ENCODE measurements at regions of chr14 and their contacts with region 1.

Region 1: GRCh38 chr14:24673534-24674203 is 39.7 kb upstream of the GZMB start:
- DNase-seq: peak; percentile 94
- H3K4me3 Mint-ChIP-seq: peak overlapping the region; percentile 84
- H3K27ac Mint-ChIP-seq: peak overlapping the region; percentile 98
- H3K4me1 Mint-ChIP-seq: peaks cover 73% of the 10 kb centered on the region
- H3K27me3 Mint-ChIP-seq: no peaks in the 10 kb centered on the region

Region 2: DNA sequence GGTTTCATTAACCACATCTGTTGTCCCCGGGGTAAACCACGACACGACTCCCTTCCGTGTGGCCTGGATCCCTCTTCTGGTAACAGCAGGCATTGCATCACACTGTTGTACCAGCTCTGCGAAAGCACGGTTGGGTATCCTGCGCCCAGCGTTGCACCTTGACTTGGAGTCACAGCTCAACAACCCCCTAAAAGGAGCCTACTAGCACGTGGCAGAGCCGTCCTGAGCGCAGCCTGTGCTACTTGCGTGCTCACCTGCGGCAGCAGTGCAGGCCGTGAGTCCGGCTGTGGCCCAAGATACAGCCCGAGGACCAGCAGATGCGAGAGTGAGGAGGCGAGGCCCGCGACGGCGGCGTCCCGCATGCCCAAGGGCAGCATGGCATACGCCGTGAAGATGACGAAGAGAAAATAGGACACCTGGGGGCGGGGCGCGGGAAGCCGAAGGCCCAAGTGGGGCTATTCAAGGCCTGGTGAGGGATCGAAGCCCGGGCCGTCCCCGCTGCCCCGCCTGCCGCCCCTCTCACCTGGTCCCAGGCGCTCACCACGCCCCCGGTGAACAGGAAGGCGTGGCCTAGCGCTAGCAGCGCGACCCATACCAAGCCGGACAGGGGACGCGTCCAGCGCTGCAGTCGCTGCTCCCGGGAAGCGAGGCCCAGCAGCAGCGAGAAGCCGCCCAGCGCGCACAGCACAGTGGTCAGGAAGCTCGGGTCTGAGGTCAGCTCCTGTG is 341.2 kb before region 1 on chr14:
- intact Hi-C with region 1: loop called (anchors 5 kb)
- DNase-seq: peak; percentile 95
- H3K4me3 Mint-ChIP-seq: peak overlapping the region; percentile 87
- H3K27ac Mint-ChIP-seq: peak overlapping the region; percentile 26
- H3K4me1 Mint-ChIP-seq: peaks cover 51% of the 10 kb centered on the region
- H3K27me3 Mint-ChIP-seq: peaks cover 33% of the 10 kb centered on the region

Region 3: DNA sequence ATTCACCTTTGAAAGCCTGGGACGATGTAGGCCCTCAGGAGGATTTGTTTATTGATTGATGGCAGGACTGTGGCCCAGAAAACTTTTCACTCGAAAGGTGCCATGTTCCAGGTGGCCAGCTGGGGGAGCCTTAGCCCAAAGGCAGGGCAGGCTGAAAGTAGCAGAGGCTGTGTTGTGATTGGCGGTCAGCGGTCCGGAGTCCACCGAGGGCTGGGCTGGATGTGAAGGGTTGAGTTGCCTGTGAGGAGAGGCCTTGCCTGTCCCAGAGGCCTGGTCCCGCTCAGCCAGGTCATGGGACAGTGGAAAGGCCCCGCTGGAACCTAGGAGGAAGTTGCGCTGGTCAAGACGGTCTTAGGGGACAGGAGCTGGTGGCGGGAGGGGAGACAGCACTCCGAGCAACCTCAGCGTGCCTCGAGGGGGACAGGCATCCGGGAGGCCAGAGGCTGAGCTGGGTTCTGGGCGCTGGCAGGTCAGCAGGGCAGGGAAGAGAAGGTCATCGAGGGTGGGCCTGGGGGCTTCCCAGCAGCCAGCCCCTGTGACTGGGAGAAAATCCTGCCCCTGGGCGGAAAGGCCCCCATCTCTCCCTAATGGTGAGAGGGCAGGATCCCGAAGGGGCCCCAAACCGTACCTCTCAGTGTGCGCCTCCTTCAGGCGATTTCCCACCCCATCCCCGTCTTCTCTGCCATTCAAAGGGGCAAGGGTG is 191.9 kb before region 1 on chr14:
- intact Hi-C with region 1: loop called (anchors 5 kb)
- DNase-seq: peak; percentile 83
- H3K4me3 Mint-ChIP-seq: peak overlapping the region; percentile 39
- H3K27ac Mint-ChIP-seq: peak overlapping the region; percentile 56
- H3K4me1 Mint-ChIP-seq: peaks cover 19% of the 10 kb centered on the region
- H3K27me3 Mint-ChIP-seq: no peaks in the 10 kb centered on the region

Region 4: DNA sequence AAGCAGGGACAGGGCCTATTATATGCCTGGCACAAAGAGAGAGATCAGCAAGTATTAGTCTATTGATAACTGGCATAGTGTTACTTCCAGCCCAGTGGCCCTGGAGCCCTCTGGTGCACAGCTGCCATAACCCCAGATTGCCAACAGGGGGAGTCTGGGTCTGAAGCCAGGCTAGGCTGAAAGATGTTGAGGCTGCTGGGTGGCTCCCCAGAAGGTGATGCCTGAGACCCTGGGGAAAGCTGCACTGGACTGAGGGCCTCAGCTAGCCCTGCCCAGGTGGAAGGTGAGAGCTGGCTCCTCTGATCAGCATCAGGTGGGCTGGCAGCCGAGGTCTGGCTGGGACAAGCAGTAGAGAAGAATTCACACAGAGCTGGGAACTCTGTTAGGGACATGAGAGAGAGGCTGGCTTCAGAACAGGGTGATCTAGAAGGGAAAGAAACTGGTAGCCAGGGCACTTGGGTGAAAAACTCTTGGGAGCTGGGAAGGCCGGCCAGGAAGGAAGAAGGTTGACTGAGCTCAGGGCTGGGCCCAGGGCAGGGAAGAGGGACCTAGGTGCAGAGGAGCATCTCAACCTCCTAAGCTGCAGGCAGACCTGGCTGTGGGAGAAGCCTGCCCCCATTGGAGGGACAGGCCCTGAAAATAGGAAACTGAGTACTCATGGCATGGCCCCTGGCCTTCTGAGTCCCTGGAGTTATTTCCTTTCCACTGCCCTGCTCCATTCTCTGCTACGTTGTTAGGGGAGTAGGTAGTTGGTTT is 68.1 kb before region 1 on chr14:
- intact Hi-C with region 1: loop called (anchors 1 kb)
- DNase-seq: peak; percentile 93
- H3K4me3 Mint-ChIP-seq: peak overlapping the region; percentile 78
- H3K27ac Mint-ChIP-seq: peak overlapping the region; percentile 91
- H3K4me1 Mint-ChIP-seq: peaks cover 56% of the 10 kb centered on the region
- H3K27me3 Mint-ChIP-seq: no peaks in the 10 kb centered on the region

Region 5: DNA sequence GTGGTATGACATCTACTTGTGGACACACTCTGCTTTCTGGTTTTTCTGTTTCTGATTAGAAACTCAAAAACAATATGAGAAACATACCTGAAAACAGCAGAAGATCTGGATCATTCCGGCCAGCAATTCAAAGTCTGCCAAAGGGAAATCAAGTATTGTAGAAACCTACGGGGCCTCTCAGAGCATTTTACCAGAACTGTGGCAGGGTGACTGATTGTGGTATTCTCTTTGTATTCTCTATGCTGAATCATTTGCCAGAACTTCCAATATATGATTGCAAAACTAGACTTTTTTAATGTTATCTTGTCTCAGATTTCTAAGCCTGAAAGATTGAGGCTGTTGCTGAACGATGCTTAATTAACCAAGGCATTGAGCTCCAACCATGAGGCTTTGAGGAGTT is 33.8 kb before region 1 on chr14:
- intact Hi-C with region 1: no loop called
- DNase-seq: no peak
- H3K4me3 Mint-ChIP-seq: peak overlapping the region; percentile 9
- H3K27ac Mint-ChIP-seq: peak overlapping the region; percentile 70
- H3K4me1 Mint-ChIP-seq: peaks cover 46% of the 10 kb centered on the region
- H3K27me3 Mint-ChIP-seq: no peaks in the 10 kb centered on the region

Region 6: GRCh38 chr14:24695265-24696241 is 21.9 kb after region 1 on chr14:
- intact Hi-C with region 1: loop called (anchors 1 kb)
- DNase-seq: peak; percentile 73
- H3K4me3 Mint-ChIP-seq: no peak overlapping the region
- H3K27ac Mint-ChIP-seq: no peak overlapping the region
- H3K4me1 Mint-ChIP-seq: peaks cover 33% of the 10 kb centered on the region
- H3K27me3 Mint-ChIP-seq: no peaks in the 10 kb centered on the region

Region 7: GRCh38 chr14:24721775-24722174 is 48.1 kb after region 1 on chr14:
- intact Hi-C with region 1: no loop called
- DNase-seq: no peak
- H3K4me3 Mint-ChIP-seq: no peak overlapping the region
- H3K27ac Mint-ChIP-seq: no peak overlapping the region
- H3K4me1 Mint-ChIP-seq: no peaks in the 10 kb centered on the region
- H3K27me3 Mint-ChIP-seq: peaks cover 48% of the 10 kb centered on the region

Measured in activated CD4-positive, alpha-beta T cell treated with anti-CD3 and anti-CD28 coated beads, Interleukin-2, amount 10 ng/mL, durations not matched to agents 24 days and 14 days (primary cell).